ENCODE measurements at regions of chr3 and their contacts with region 1.

Region 1: GRCh38 chr3:85360742-85361387 is 402.1 kb downstream of the CADM2 start:
- DNase-seq: peak; percentile 45
- H3K4me3 ChIP-seq: no peak overlapping the region
- H3K27ac ChIP-seq: no peak overlapping the region
- H3K4me1 ChIP-seq: no peaks in the 10 kb centered on the region
- H3K27me3 ChIP-seq: no peaks in the 10 kb centered on the region
- CTCF ChIP-seq: peak; percentile 64 to 76

Region 2: DNA sequence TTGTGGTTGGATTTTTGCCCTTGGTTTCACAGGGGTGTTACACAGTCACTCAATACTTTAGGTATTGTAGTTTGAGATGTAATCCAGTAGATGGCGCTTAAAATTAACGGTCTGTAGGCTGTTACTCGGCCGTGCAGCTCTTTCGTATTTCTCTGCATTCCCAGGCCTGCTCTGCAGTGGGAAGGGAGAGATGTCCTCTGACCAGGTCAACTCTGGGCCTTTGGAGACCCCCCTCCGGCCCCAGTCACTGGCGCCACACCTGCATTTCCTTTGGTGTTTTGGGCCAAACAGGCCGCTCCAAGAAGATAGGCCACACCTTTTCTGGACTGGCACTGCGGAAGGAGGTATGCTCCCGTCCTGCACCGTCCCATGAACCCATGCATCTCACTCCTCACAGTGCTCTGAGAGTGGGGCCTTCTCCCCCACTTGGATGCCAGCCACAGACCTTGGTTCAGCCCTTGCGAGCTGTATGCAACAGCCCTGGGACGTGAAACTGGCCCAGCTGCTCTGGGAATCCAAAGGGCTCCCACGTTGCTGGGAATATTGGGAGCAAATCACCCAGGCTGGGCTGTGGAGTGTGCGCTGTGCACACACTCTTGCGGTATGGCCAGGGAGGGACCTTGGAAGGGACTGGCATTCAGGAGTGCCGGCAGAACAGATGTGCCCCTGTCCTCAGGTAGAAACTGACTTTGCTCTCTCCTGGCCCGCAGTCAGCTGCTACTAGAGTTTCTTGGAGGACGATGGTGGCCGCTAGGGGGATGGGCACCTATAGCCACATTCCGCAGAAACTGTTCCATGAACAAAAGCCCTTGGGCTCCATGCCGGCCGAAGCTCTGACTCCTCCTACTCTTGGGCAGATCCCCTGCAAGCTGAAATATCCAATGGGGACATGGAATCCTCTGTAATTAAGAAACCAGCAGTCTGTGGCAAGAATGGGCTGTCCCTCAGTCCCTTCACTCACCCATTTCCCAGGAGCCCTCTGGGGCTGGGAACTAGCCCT is 812.6 kb before region 1 on chr3:
- CTCF ChIA-PET with region 1: no interaction called
- dilution Hi-C with region 1: no loop called
- in situ Hi-C with region 1: no loop called
- intact Hi-C with region 1: loop called (anchors 1 kb)
- DNase-seq: peak; percentile 16
- H3K4me3 ChIP-seq: no peak overlapping the region
- H3K27ac ChIP-seq: no peak overlapping the region
- H3K4me1 ChIP-seq: no peaks in the 10 kb centered on the region
- H3K27me3 ChIP-seq: no peaks in the 10 kb centered on the region
- CTCF ChIP-seq: peak; percentile 44 to 58

Region 3: DNA sequence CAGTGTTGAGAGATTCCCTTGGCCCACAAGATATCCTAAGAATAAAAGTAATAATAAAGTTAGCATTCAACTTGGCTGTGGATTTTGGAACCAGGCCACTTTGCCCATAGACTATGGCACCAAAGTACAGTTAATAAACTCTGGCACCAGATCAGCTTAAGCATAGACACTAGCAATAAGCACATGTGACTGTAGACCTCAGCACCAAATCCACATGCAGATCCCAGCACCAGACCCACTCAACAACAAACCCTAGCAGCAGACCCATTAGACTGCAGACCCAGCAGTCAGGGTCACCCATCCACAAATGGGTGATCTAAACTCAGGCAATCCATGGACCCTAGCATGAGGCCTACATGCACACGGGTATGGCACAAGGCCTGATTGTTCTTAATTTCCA is 786.9 kb before region 1 on chr3:
- CTCF ChIA-PET with region 1: no interaction called
- dilution Hi-C with region 1: no loop called
- in situ Hi-C with region 1: no loop called
- intact Hi-C with region 1: no loop called
- DNase-seq: no peak
- H3K4me3 ChIP-seq: no peak overlapping the region
- H3K27ac ChIP-seq: no peak overlapping the region
- H3K4me1 ChIP-seq: no peaks in the 10 kb centered on the region
- H3K27me3 ChIP-seq: no peaks in the 10 kb centered on the region
- CTCF ChIP-seq: no peak

Region 4: GRCh38 chr3:84974347-84974746 is 386.5 kb before region 1 on chr3:
- CTCF ChIA-PET with region 1: no interaction called
- dilution Hi-C with region 1: no loop called
- in situ Hi-C with region 1: no loop called
- intact Hi-C with region 1: loop called (anchors 10 kb)
- DNase-seq: no peak
- H3K4me3 ChIP-seq: no peak overlapping the region
- H3K27ac ChIP-seq: no peak overlapping the region
- H3K4me1 ChIP-seq: no peaks in the 10 kb centered on the region
- H3K27me3 ChIP-seq: no peaks in the 10 kb centered on the region
- CTCF ChIP-seq: peak in 1 of 2 donors; percentile 22

Region 5: GRCh38 chr3:85110393-85110792 is 250.5 kb before region 1 on chr3:
- CTCF ChIA-PET with region 1: no interaction called
- dilution Hi-C with region 1: no loop called
- in situ Hi-C with region 1: no loop called
- intact Hi-C with region 1: loop called (anchors 2 kb)
- DNase-seq: no peak
- H3K4me3 ChIP-seq: no peak overlapping the region
- H3K27ac ChIP-seq: no peak overlapping the region
- H3K4me1 ChIP-seq: no peaks in the 10 kb centered on the region
- H3K27me3 ChIP-seq: no peaks in the 10 kb centered on the region
- CTCF ChIP-seq: peak in 1 of 2 donors; percentile 23

Region 6: DNA sequence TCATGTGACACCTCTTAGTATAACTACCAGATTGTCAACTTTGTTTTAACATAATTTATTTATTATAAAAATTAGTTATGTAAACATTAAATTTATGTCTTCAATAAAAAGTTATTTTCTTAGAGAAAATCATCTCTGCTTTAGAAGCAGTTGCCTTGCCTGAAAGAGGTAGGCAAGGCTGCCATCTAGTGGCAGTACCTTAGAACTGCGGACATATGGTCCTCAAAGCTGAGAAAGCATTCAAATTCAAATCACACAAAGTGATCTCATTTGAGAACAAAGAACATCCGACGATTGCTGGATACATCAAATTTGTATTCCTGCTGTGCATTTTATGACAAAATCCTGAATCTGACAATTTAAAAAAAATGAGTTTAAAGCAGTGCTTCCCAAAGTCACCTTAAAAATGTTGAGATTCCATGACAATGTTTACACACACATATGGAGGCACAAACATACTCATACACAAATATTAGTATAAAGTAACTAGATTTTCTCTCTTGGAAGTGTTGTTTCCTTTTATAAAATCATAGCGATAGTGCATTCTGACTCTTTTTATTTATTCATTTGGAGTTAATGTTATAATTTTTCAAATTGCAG is 215.3 kb after region 1 on chr3:
- CTCF ChIA-PET with region 1: no interaction called
- dilution Hi-C with region 1: no loop called
- in situ Hi-C with region 1: no loop called
- intact Hi-C with region 1: loop called (anchors 5 kb)
- DNase-seq: peak; percentile 31
- H3K4me3 ChIP-seq: no peak overlapping the region
- H3K27ac ChIP-seq: no peak overlapping the region
- H3K4me1 ChIP-seq: no peaks in the 10 kb centered on the region
- H3K27me3 ChIP-seq: no peaks in the 10 kb centered on the region
- CTCF ChIP-seq: peak; percentile 82 to 88

Region 7: GRCh38 chr3:85801955-85802354 is 441.1 kb after region 1 on chr3:
- CTCF ChIA-PET with region 1: no interaction called
- dilution Hi-C with region 1: no loop called
- in situ Hi-C with region 1: no loop called
- intact Hi-C with region 1: loop called (anchors 10 kb)
- DNase-seq: peak; percentile 29
- H3K4me3 ChIP-seq: no peak overlapping the region
- H3K27ac ChIP-seq: no peak overlapping the region
- H3K4me1 ChIP-seq: no peaks in the 10 kb centered on the region
- H3K27me3 ChIP-seq: no peaks in the 10 kb centered on the region
- CTCF ChIP-seq: peak; percentile 56 to 75